ENCODE measurements at regions of chr1 and their contacts with region 1.

Region 1: DNA sequence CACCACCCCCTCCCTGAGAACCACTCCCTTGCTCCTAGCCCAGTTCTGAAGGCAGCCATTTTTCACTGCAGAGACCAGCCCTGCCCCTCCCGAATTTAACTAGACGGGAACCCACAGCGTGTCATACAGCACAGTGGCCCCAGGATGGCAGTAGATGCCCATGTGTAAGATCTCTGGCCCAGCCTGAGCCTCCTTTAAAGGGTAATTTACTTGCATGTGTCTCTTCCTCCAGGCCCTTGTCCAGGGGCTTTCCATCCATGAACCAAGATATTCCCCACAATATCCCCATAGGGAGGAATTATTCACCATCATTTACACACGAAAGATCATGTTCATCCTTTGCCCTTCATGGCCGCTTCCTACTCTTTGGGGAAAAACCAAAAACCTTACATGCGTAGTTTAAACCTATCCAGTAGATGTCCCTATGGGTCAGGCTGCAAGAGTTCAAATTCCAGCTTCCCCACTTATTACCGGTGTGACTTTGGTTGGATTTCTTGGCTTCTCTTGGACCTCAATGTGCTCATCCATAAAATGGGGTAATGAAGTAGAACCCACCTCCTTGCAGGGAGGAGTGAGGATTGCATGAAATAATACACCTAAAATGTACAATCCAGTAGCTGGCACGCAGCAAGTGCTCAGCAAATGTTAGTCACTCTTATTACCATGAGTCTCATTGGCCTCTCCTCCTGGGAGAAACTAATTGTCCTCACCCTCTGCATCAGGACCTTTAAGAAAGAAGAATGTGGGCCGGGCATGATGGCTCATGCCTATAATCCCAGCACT is 4.0 kb upstream of the LACTBL1 start:
- DNase-seq: no peak

Region 2: DNA sequence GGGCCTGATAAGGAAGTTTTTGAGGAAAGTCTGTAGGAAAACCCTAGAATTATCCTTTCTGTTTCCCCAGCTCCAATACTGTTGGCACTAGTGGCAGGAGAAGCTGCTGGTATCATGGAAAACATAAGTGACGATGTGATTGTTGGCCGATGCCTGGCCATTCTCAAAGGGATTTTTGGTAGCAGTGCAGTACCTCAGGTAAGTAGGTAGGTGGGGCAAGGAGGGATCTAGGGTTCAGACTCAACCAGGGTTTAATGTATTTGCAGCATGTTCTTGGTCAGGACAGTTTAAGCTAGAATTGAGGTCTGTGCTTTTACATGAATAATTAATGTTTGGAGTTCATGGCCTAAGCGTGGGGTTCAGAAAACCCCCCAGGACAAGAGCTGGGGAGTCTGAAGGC is 104.7 kb after region 1 on chr1:
- intact Hi-C with region 1: loop called (anchors 10 kb)
- DNase-seq: no peak

Region 3: GRCh38 chr1:23184212-23184934 is 207.7 kb after region 1 on chr1:
- intact Hi-C with region 1: loop called (anchors 2 kb)
- DNase-seq: no peak

Region 4: GRCh38 chr1:23282957-23283356 is 306.3 kb after region 1 on chr1:
- intact Hi-C with region 1: loop called (anchors 5 kb)
- DNase-seq: no peak